HepG2 (cell line): ENCODE measurements at regions of chr12 and their contacts with region 1.

Region 1: GRCh38 chr12:8687846-8688601 is 9.8 kb upstream of the RIMKLB start:
- DNase-seq: no peak
- ATAC-seq: no peak
- H3K4me3 ChIP-seq: no peak overlapping the region
- H3K27ac ChIP-seq: no peak overlapping the region
- H3K4me1 ChIP-seq: no peaks in the 10 kb centered on the region
- H3K27me3 ChIP-seq: peaks cover 1 to 23% of the 10 kb centered on the region in 2 experiments; a peak in 1 of 5 replicates
- CTCF ChIP-seq: no peak
- EP300 ChIP-seq: no peak
- POLR2A ChIP-seq: no peak
- RAD21 ChIP-seq: no peak

Region 2: DNA sequence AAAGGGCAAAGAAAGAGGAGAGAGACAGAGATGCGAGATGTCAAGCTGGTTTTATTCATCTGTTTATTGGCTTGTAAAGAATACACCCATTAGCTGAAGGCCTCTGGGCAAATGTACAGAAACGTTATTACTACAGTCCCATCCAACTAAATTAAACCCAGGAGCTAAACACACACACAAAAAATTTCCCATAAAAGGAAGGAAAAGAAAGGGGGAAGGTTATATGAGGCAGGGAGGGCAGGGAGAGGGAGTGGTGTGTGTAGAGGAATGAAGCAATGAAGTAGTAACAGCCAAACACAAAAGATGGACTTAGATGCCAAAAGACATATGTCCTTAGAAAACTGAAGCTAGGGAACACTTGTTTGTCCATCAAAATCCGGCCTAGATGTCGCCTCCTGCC is 22.3 kb before region 1 on chr12:
- CTCF ChIA-PET with region 1: no interaction called
- POLR2A ChIA-PET with region 1: no interaction called
- in situ Hi-C with region 1: no loop called
- intact Hi-C with region 1: no loop called
- DNase-seq: no peak
- ATAC-seq: no peak
- H3K4me3 ChIP-seq: no peak overlapping the region
- H3K27ac ChIP-seq: no peak overlapping the region
- H3K4me1 ChIP-seq: no peaks in the 10 kb centered on the region
- H3K27me3 ChIP-seq: peaks cover 0 to 10% of the 10 kb centered on the region in 2 experiments; a peak in 3 of 5 replicates
- CTCF ChIP-seq: no peak
- EP300 ChIP-seq: no peak
- POLR2A ChIP-seq: no peak
- RAD21 ChIP-seq: no peak

Region 3: DNA sequence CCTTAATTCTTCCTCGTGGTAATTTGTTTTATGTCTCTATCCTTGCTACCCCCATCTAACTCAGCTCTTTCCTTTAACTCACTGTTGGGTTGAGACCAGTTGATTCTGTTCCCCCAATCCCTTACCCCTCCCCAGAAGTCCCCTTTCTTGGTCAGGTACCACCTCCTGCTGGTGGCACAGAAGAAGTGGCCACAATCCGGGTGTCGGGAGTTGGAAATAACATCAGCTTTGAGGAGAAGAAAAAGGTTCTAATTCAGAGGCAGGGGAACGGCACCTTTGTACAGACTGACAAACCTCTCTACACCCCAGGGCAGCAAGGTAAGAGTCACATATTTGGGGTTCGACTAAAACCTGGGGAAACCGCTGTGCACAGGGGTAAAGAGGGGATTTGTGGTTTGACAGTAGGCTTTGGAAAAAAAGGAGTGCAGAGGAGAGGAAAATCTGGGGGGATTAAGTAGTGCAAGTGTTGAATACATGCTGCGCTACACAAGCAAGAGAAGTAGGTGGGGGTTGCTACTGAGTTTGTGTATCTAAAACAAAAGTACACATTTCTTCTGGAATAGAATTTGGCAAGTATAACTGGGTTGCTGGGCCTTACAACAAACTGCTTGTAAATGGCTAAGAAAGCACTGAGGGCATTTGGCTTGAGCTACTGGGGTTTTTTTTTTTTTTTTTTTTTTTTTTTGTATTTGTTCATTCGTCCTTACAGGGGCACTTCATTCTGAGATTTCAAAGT is 135.7 kb after region 1 on chr12:
- CTCF ChIA-PET with region 1: no interaction called
- POLR2A ChIA-PET with region 1: no interaction called
- in situ Hi-C with region 1: no loop called
- intact Hi-C with region 1: loop called (anchors 2 kb)
- DNase-seq: no peak
- ATAC-seq: peak; percentile 41; the same call in 2 of the 3 replicates
- H3K4me3 ChIP-seq: no peak overlapping the region
- H3K27ac ChIP-seq: no peak overlapping the region
- H3K4me1 ChIP-seq: no peaks in the 10 kb centered on the region
- H3K27me3 ChIP-seq: peaks cover 0 to 2% of the 10 kb centered on the region in 2 experiments; a peak in 3 of 5 replicates
- CTCF ChIP-seq: peak; percentile 51
- EP300 ChIP-seq: no peak
- POLR2A ChIP-seq: no peak
- RAD21 ChIP-seq: 0 out of 2 replicates have a peak, but pooled peaks have one; percentile 11

Region 4: DNA sequence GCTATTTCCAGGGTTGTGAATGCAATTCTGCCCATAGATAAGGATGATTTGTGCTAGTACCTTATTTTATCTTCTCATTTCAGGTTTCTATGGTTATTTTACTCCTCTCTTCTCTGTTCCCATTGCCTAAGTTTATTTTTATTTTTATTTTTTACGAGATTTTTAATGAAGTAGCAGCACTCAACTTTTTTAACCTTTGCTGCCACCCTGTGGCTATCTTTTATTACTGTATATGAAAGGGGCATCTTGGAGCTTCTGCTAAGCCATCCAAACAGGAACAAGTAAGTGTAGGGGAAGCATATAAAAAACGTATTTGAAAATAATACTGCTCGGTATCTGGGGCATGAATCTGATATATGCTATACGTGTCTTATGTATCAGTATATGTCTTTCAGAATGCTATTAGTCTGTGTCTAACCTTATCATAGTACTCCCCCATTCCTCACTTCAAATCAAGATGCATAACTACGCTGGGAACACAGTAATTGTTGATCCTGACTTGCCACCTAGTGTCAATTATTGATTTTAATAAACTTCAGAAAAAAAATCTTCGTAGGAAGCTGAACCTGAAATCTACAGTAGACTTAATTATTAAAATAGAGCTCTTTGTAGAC is 361.6 kb after region 1 on chr12:
- CTCF ChIA-PET with region 1: interaction called, 15 read pairs
- POLR2A ChIA-PET with region 1: no interaction called
- in situ Hi-C with region 1: loop called (anchors 5 kb)
- intact Hi-C with region 1: loop called (anchors 2 kb)
- DNase-seq: peak; percentile 46
- ATAC-seq: peak; percentile 73
- H3K4me3 ChIP-seq: no peak overlapping the region
- H3K27ac ChIP-seq: no peak overlapping the region
- H3K4me1 ChIP-seq: no peaks in the 10 kb centered on the region
- H3K27me3 ChIP-seq: peaks cover 0 to 16% of the 10 kb centered on the region in 2 experiments; a peak in 4 of 5 replicates
- CTCF ChIP-seq: peak; percentile 49
- EP300 ChIP-seq: no peak
- POLR2A ChIP-seq: no peak
- RAD21 ChIP-seq: no peak